AG04450 (cell line): ENCODE measurements at regions of chr3 and their contacts with region 1.

Region 1: DNA sequence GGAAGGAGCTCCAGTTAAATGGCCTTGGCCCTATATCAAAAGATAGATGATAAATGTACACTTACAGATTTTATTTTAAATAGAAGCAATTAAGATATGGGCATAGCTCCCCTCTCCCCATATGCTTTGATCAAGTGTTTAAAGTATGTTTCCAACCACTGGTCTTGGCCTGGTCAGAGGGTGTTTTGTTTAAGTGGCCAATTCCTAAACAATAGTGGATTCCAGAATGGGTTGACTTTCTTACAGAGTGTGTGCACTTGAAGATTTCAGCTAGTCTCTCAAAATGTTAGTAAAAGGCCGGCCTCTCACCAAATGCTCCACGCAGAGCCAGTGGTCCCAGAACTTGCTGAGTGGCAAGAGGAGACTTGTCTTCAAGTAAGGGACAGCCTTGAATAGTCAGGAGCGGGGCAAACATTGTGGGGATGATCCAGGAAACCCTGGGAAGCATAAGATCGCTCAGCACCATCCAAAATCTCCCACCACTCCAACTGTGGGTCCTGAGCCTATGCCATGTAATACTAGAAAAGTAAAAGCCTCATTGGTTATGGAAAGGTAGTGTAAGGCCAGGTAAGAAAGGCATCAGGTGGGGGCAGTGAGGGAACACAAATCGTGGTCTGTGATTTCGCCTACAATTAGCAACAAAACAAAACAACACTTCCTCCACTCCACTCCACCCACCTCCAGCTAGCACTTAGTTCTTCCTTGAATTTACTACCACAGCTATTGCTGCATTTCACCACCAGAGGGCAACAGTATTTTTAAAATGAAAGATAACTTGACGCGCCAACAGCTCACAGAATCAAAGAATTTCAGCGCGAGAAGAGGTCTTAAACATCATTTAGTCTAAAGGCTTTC is 4.8 kb downstream of the RARRES1 start:
- DNase-seq: no peak
- H3K4me3 ChIP-seq: no peak overlapping the region
- H3K27ac ChIP-seq: no peak overlapping the region
- H3K27me3 ChIP-seq: no peaks in the 10 kb centered on the region
- CTCF ChIP-seq: peak; percentile 80

Region 2: GRCh38 chr3:158152186-158152585 is 575.2 kb before region 1 on chr3:
- CTCF ChIA-PET with region 1: no interaction called
- POLR2A ChIA-PET with region 1: no interaction called
- DNase-seq: no peak
- H3K4me3 ChIP-seq: no peak overlapping the region
- H3K27ac ChIP-seq: no peak overlapping the region
- H3K27me3 ChIP-seq: no peaks in the 10 kb centered on the region
- CTCF ChIP-seq: no peak

Region 3: GRCh38 chr3:158672293-158673176 is 54.9 kb before region 1 on chr3 and contains the start of gene LXN:
- CTCF ChIA-PET with region 1: interaction called, 15 read pairs
- POLR2A ChIA-PET with region 1: interaction called, 6 read pairs
- DNase-seq: peak; percentile 60
- H3K4me3 ChIP-seq: peak within 1 kb of the TSS; percentile 90
- H3K27ac ChIP-seq: peak within 1 kb of the TSS; percentile 55
- H3K27me3 ChIP-seq: no peaks in the 10 kb centered on the region
- CTCF ChIP-seq: peak; percentile 90
- polyA plus RNA-seq, gene LXN: 281 and 347 TPM in 2 replicates

Region 4: DNA sequence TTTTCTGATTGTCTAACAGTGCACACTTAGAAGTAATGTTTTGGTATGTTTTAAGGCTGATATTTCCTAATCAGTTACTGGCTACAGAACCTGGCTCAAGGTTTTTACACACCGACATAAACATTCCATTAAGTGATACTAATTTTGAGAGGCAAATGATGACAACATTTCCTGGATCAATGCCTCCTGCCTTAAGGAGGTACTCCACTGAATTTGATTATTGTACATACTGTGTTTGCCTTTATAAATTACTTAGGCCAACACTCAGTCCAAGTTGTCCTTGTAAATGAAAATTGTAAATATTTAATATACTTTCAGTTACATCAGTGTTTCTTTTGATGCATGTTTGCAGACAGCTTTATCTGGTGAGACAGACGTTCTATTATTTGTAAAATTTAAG is 30.8 kb before region 1 on chr3:
- CTCF ChIA-PET with region 1: interaction called, 38 read pairs
- POLR2A ChIA-PET with region 1: interaction called, 3 read pairs
- DNase-seq: no peak
- H3K4me3 ChIP-seq: no peak overlapping the region
- H3K27ac ChIP-seq: no peak overlapping the region
- H3K27me3 ChIP-seq: no peaks in the 10 kb centered on the region
- CTCF ChIP-seq: no peak

Region 5: GRCh38 chr3:158742871-158743663 is 15.6 kb after region 1 on chr3:
- CTCF ChIA-PET with region 1: interaction called, 37 read pairs
- POLR2A ChIA-PET with region 1: interaction called, 4 read pairs
- DNase-seq: no peak
- H3K4me3 ChIP-seq: no peak overlapping the region
- H3K27ac ChIP-seq: no peak overlapping the region
- H3K27me3 ChIP-seq: no peaks in the 10 kb centered on the region
- CTCF ChIP-seq: no peak

Region 6: DNA sequence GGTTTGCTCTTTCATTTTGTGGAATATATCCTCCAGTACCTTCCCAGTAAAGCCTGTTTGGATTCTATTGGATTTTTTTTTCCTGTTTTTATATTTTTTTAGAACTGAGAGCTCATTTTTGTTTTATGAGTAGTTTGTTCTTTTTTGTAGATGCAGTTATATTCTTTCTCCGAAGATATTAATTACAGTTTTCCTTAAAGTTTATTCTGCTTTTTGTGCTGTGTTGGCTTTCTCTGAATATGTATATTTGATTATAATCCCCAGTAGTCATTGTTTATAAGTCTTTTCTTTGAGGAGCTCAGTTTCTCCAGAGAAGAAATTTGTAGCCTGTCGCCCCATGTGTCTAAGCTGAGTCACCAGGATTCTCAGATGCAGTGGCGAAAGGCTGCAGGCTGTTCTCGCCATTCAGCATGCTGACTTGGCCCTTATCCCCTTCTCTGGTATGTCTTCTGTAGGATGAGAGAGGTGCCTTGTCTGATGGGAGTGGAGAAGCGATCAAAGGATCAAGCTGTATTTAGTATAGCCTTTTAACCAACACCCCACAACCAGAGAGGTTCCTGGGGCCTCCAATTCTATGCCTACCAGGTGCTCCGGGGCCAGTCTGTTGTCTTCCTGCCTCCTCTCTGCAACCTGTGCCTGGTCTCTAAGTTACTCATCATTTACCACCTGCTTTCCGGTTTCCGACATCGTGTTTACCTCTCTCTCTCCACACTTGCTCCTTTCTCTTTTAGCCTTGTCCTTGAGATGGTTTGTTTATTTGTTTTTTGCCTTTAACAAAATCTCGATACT is 42.7 kb after region 1 on chr3:
- CTCF ChIA-PET with region 1: interaction called, 13 read pairs
- POLR2A ChIA-PET with region 1: no interaction called
- DNase-seq: peak; percentile 72
- H3K4me3 ChIP-seq: no peak overlapping the region
- H3K27ac ChIP-seq: peak overlapping the region; percentile 92
- H3K27me3 ChIP-seq: no peaks in the 10 kb centered on the region
- CTCF ChIP-seq: no peak

Region 7: GRCh38 chr3:158790901-158791589 is 63.6 kb after region 1 on chr3:
- CTCF ChIA-PET with region 1: interaction called, 206 read pairs
- POLR2A ChIA-PET with region 1: interaction called, 7 read pairs
- DNase-seq: no peak
- H3K4me3 ChIP-seq: no peak overlapping the region
- H3K27ac ChIP-seq: no peak overlapping the region
- H3K27me3 ChIP-seq: no peaks in the 10 kb centered on the region
- CTCF ChIP-seq: peak; percentile 84

Region 8: DNA sequence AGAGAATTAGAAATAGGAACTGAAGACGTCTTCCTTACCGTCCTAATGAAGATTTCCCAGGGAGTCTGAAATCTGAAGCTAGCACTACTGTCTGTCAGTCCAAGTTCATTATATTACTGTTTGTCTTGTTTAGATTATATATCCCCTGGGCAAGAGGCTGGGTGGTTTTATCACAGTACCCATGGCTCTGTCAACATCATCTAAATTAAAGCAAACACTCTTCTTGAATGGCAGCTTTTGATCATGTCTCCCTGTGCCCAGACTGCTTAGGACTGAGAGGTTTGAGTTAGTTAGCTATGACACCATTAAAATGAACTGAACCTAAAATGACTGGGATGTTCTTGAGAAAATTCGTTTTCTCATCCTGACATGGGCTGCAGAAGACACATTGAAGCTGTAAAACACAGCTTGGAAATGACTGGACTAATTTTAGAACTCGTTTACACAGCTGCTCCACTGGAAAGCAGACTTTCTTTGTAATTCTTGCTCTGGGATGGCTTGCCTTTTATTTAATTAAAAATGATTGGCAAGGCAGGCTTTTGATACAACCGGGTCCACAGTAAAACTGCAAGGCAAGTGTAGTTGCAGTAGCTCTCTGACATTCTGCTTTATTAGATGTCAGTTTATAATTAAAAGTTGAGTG is 318.0 kb after region 1 on chr3:
- CTCF ChIA-PET with region 1: no interaction called
- POLR2A ChIA-PET with region 1: no interaction called
- DNase-seq: no peak
- H3K4me3 ChIP-seq: no peak overlapping the region
- H3K27ac ChIP-seq: no peak overlapping the region
- H3K27me3 ChIP-seq: no peaks in the 10 kb centered on the region
- CTCF ChIP-seq: no peak